Activated CD4-positive, alpha-beta T cell treated with anti-CD3 and anti-CD28 coated beads, Interleukin-2, amount 10 ng/mL, durations not matched to agents 24 days and 14 days (primary cell): ENCODE measurements at regions of chr2 and their contacts with region 1.

Region 1: GRCh38 chr2:230770804-230771203 is 58.2 kb downstream of the CAB39 start:
- DNase-seq: no peak
- H3K4me3 Mint-ChIP-seq: peak overlapping the region; percentile 15
- H3K27ac Mint-ChIP-seq: peak overlapping the region; percentile 44
- H3K4me1 Mint-ChIP-seq: peaks cover 74% of the 10 kb centered on the region
- H3K27me3 Mint-ChIP-seq: no peaks in the 10 kb centered on the region

Region 2: GRCh38 chr2:230751062-230751461 is 19.7 kb before region 1 on chr2:
- intact Hi-C with region 1: loop called (anchors 2 kb)
- DNase-seq: peak; percentile 65
- H3K4me3 Mint-ChIP-seq: no peak overlapping the region
- H3K27ac Mint-ChIP-seq: peak overlapping the region; percentile 70
- H3K4me1 Mint-ChIP-seq: peaks cover 63% of the 10 kb centered on the region
- H3K27me3 Mint-ChIP-seq: no peaks in the 10 kb centered on the region